Sciatic nerve (tissue), 2 donors: ENCODE measurements at regions of chr15 and their contacts with region 1.

Region 1: GRCh38 chr15:79185199-79185598 is 94.6 kb upstream of the RASGRF1 start:
- DNase-seq: no peak
- ATAC-seq: no peak

Region 2: DNA sequence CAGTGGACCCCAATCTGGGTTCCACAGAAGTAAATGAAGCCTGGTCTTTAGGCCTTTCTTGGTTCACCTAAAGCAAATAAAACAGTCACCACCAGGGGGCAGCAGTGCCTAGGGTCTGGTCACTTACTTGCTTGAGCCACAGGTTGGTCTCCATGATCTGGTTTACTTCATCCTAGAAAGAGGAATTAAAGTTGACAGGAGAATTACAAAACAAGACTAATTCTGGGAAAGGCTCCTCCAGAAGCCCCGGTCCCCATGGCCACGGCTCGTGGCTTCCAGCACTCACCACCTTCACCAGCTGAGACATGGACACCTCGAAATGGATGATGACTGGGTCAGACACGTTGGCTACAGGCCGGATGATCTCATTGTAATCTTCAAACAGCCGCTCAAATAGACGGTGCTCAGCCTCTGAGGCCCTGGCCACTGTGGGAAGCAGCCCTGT is 566.7 kb before region 1 on chr15:
- intact Hi-C with region 1: loop called (anchors 5 kb)
- DNase-seq: peak; percentile 93
- ATAC-seq: peak; percentile 85

Region 3: DNA sequence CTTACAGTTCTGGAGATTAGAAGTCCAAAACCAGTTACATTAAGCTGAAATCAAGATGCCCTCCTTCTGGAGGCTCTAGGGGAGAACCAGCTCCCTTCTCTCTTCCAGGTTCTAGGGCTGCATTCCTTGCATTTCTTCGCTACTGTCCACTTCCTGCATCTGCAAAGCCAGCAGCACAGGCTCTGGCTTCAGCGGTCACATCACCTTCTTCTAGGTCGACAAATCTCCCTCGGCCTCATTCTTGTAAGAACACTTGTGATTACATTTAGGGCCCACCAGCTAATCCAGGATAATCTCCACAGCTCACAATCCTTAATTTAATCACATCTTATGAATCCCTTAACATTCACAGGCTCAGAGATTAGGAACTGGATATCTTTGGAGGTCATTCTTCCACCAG is 320.8 kb after region 1 on chr15:
- intact Hi-C with region 1: no loop called
- DNase-seq: no peak
- ATAC-seq: no peak